Aorta (tissue), 5 donors: ENCODE measurements at regions of chr16 and their contacts with region 1.

Region 1: GRCh38 chr16:78002915-78003538 is 19.3 kb upstream of the CLEC3A start:
- DNase-seq: peak; percentile 91 to 95
- ATAC-seq: peak; percentile 92
- H3K4me3 ChIP-seq: no peak overlapping the region
- H3K27ac ChIP-seq: no peak overlapping the region
- H3K4me1 ChIP-seq: no peaks in the 10 kb centered on the region
- H3K27me3 ChIP-seq: no peaks in the 10 kb centered on the region

Region 2: DNA sequence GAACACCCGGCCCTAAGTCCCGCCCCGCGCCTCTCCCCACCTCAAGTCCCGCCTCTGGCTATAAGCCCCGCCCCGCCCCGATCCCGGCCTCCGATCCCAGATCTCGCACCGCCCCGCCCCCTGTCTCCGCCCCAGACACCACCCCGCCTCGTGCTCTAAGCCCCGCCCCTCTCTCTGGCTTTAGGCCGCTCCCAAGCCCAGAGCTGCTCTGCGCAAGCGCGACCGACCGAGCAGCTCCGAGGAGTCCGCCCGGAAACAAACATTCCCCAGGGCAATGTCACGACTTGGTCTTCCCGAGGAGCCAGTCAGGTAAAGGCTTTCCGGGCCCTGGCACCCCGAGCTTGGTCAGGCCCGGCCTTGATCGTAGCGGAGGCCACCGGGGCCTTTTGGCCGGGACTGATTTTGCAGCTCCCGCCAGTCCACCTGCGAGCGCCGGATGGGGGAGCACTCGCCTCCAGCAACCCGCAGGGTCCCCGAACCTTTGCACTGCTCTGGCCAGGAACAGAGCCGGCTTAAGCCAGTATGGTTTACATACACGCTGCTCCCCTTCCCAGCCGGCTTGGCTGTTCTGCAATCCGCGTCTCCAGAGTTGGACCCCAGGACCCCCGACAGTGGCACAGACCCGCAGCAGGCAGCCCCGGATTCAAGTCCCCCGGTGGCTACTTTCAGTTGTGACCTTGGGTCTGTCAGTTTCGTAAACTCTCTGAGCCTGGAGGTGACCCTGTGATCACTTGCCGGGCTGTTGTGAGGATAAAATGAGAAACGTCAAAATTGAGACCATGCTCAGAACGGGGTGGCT is 280.5 kb before region 1 on chr16 and contains the start of gene NUDT7:
- intact Hi-C with region 1: loop called in 1 of 2 experiments (anchors 2 kb)
- DNase-seq: peak; percentile 100
- ATAC-seq: peak; percentile 100
- H3K4me3 ChIP-seq: peak within 1 kb of the TSS; percentile 48 to 87
- H3K27ac ChIP-seq: peak within 1 kb of the TSS in 1 of 2 donors; percentile 90
- H3K4me1 ChIP-seq: no peaks in the 10 kb centered on the region
- H3K27me3 ChIP-seq: no peaks in the 10 kb centered on the region
- total RNA-seq, gene NUDT7: 3.8 to 12.1 TPM

Region 3: DNA sequence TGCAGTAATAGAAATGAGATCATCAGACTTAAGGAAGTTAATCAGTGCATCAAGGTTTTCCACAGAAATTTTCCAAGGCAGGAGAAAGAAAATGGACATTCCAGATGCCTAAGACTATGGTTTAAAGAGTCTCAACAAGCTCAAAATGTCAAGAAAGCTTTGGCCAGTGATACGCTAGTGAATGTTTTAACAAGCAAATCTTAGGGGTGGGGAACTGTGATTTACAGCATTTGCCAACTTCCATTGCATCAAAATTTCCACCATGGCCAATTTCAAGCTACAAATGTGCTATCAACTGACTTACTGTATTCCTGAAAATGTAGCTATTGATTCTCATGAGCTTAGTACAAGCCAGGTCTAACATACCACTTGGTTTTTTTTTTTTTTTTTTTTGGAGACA is 63.1 kb before region 1 on chr16:
- intact Hi-C with region 1: no loop called
- DNase-seq: no peak
- ATAC-seq: no peak
- H3K4me3 ChIP-seq: no peak overlapping the region
- H3K27ac ChIP-seq: no peak overlapping the region
- H3K4me1 ChIP-seq: peaks cover 0 to 7% of the 10 kb centered on the region in 2 donors
- H3K27me3 ChIP-seq: no peaks in the 10 kb centered on the region

Region 4: GRCh38 chr16:77951775-77952174 is 51.3 kb before region 1 on chr16:
- intact Hi-C with region 1: loop called in 1 of 2 experiments (anchors 10 kb)
- DNase-seq: no peak
- ATAC-seq: no peak
- H3K4me3 ChIP-seq: no peak overlapping the region
- H3K27ac ChIP-seq: no peak overlapping the region
- H3K4me1 ChIP-seq: no peaks in the 10 kb centered on the region
- H3K27me3 ChIP-seq: no peaks in the 10 kb centered on the region

Region 5: GRCh38 chr16:77987810-77988209 is 15.2 kb before region 1 on chr16:
- intact Hi-C with region 1: no loop called
- DNase-seq: no peak
- ATAC-seq: peak; percentile 85
- H3K4me3 ChIP-seq: no peak overlapping the region
- H3K27ac ChIP-seq: peak overlapping the region; percentile 39 to 74
- H3K4me1 ChIP-seq: peaks cover 0 to 5% of the 10 kb centered on the region in 2 donors
- H3K27me3 ChIP-seq: no peaks in the 10 kb centered on the region